GM18951 (cell line): ENCODE measurements at regions of chr7 and their contacts with region 1.

Region 1: DNA sequence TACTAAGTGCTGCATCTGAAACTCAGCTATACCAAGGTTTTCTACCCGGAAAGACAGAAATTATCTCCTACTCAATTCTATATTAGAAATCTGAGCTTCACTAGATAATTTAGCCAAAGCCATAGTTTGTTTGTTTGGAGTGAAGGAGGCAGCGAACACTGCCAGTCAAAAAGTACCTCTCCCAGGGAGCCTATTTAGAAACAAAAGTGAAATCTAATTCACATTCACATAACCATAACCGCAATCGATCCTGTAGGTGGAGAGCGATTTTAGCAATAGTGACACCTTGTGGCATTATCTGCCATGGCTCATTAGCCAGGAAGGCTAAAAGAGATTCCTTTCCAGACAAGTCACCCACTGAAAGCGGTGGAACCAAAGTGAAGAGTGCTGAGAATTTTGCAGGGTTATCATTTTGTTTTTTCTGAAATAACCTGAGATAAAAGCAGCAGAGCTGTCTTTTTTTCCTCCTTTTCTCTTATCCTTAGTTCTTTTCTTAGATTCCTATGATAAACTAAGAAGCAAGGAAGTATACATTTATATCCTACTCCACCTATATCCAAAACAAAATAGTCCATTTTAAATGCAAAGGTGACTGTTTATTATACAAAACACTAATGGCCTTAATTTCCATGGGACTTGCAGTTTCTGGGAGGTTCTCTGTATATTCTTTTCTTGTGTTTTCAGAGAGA is 83.7 kb upstream of the BET1 start:
- POLR2A ChIP-seq: no peak

Region 2: GRCh38 chr7:93592588-93593266 is 495.1 kb before region 1 on chr7:
- in situ Hi-C with region 1: no loop called
- POLR2A ChIP-seq: no peak

Region 3: GRCh38 chr7:93910076-93910994 is 177.5 kb before region 1 on chr7:
- in situ Hi-C with region 1: loop called (anchors 10 kb)
- POLR2A ChIP-seq: no peak

Region 4: GRCh38 chr7:94792270-94792669 is 704.5 kb after region 1 on chr7:
- in situ Hi-C with region 1: no loop called
- POLR2A ChIP-seq: no peak